Heart left ventricle (tissue), 16 donors: ENCODE measurements at regions of chr16 and their contacts with region 1.

Region 1: DNA sequence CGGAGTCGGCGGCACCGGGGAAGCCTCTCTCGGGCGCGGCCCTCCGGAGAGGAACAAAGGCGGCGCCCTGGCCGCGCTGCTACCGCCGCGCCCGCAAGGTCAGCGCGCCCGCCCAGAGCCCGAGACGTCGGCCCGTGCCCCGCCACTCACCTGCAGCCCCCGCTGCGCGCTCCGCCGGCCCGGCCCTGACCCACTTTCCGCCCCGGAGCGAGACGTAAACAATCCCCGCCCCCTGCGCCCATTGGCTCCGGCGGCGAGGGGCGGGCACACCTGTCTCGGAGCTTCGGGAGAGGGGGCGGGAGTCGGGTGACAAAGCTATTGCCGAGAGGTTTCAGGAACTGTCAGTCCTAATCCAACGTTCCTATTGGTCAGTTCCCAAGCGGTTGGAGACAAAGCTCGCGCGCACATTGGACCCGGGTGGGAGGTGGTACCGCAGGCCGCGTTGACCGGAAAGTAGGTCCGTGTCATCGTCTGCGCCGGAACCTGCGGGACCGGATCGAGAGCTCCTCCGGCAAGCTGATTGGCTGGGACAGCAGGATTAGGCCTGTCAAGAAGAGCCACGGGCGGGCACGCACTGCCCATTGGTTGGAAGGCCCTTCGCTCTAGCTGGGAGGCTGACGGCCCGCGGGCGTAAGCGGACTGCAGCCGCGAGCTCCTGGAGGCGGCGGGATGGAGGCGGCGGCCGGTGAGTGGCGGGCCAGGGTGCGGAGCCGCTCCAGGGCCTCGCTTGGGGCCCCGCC is at the starts of genes NUBP2 and SPSB3:
- DNase-seq: peak; percentile 100
- ATAC-seq: peak; percentile 93 to 98 (median 96)
- H3K4me3 ChIP-seq: peak within 1 kb of the TSS; percentile 75 to 100 (median 95)
- H3K27ac ChIP-seq: peak within 1 kb of the TSS; percentile 58 to 94 (median 88)
- H3K4me1 ChIP-seq: peaks cover 2 to 56% (median 28%) of the 10 kb centered on the region in 12 donors
- H3K27me3 ChIP-seq: no peaks in the 10 kb centered on the region
- CTCF ChIP-seq: peak in 1 of 12 donors; percentile 10
- POLR2A ChIP-seq: peak; percentile 80 to 93
- total RNA-seq, gene NUBP2: 26.7 to 81.9 (median 30.1) TPM
- total RNA-seq, gene SPSB3: 25.8 to 100 (median 31.8) TPM

Region 2: DNA sequence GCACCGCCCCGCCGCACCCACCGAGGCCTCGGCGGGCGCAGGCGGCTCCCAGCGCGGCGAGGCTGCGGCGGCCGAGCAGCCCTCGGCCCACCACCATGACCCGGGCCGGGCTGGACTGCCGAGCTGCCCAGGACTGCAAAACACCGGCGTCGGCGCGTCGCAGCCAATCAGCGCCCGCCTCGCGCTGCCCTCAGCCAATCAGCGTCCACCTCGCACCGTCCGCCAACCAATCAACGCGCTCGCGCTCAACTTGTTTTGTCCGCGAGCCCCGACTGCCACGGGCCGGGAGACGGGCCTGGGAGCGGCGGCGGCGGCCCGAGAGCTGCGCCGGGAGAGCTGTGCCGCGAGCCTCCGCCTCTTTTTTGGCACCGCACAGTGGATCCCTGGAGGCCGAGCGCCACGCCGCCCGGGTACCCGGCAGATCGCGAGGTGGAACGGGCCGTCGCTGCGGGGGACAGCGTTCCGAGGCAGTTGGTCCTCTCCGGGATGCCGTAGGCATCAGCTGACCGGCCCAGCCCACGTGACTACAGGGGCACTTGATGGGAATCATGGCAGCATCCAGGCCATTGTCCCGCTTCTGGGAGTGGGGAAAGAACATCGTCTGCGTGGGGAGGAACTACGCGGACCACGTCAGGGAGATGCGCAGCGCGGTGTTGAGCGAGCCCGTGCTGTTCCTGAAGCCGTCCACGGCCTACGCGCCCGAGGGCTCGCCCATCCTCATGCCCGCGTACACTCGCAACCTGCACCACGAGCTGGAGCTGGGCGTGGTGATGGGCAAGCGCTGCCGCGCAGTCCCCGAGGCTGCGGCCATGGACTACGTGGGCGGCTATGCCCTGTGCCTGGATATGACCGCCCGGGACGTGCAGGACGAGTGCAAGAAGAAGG is 44.4 kb after region 1 on chr16 and contains the starts of genes FAHD1 and HAGH:
- intact Hi-C with region 1: loop called in 1 of 10 experiments (anchors 1 kb)
- DNase-seq: peak; percentile 93 to 96 (median 95)
- ATAC-seq: peak; percentile 85 to 95 (median 94)
- H3K4me3 ChIP-seq: peak within 1 kb of the TSS; percentile 58 to 99 (median 82)
- H3K27ac ChIP-seq: peak within 1 kb of the TSS; percentile 32 to 97 (median 86)
- H3K4me1 ChIP-seq: peaks cover 9 to 57% (median 46%) of the 10 kb centered on the region in 12 donors
- H3K27me3 ChIP-seq: no peaks in the 10 kb centered on the region
- CTCF ChIP-seq: no peak
- POLR2A ChIP-seq: peak in 1 of 2 donors; percentile 35
- total RNA-seq, gene FAHD1: 19.2 to 83.8 (median 28.4) TPM
- total RNA-seq, gene HAGH: 111 to 358 (median 165) TPM

Region 3: GRCh38 chr16:1942810-1943726 is 160.5 kb after region 1 on chr16 and contains the start of gene MSRB1:
- intact Hi-C with region 1: loop called in 1 of 10 experiments (anchors 5 kb)
- DNase-seq: peak; percentile 100
- ATAC-seq: peak; percentile 91 to 96 (median 93)
- H3K4me3 ChIP-seq: peak within 1 kb of the TSS; percentile 50 to 88 (median 78)
- H3K27ac ChIP-seq: peak within 1 kb of the TSS in 11 of 12 donors; percentile 77 to 89 (median 81)
- H3K4me1 ChIP-seq: peaks cover 0 to 30% (median 16%) of the 10 kb centered on the region in 12 donors
- H3K27me3 ChIP-seq: no peaks in the 10 kb centered on the region
- CTCF ChIP-seq: no peak
- POLR2A ChIP-seq: peak; percentile 90 to 98
- total RNA-seq, gene MSRB1: 12.4 to 49.2 (median 31.1) TPM